ENCODE measurements at regions of chr7 and their contacts with region 1.

Region 1: GRCh38 chr7:27662490-27663205 is at the start of gene HIBADH:
- DNase-seq: peak; percentile 86 to 99 (median 96)
- ATAC-seq: peak; percentile 96 to 98 (median 96)
- H3K4me3 ChIP-seq: peak within 1 kb of the TSS; percentile 89 to 95
- H3K4me3 Mint-ChIP-seq: peak within 1 kb of the TSS; percentile 81 to 85 (median 83)
- H3K27ac ChIP-seq: peak within 1 kb of the TSS; percentile 79
- H3K27ac Mint-ChIP-seq: peak within 1 kb of the TSS; percentile 84 to 93
- H3K4me1 ChIP-seq: peaks cover 11 to 16% of the 10 kb centered on the region in 2 experiments
- H3K4me1 Mint-ChIP-seq: peaks cover 11 to 26% (median 20%) of the 10 kb centered on the region in 3 donors
- H3K27me3 ChIP-seq: no peaks in the 10 kb centered on the region
- H3K27me3 Mint-ChIP-seq: no peaks in the 10 kb centered on the region
- total RNA-seq, gene HIBADH: 9.8 to 12.5 (median 12.0) TPM

Region 2: GRCh38 chr7:27651702-27652101 is 10.9 kb before region 1 on chr7:
- CTCF ChIA-PET with region 1: interaction called in 1 of 2 experiments, 3 read pairs
- POLR2A ChIA-PET with region 1: interaction called in 1 of 2 experiments, 11 read pairs
- DNase-seq: no peak
- ATAC-seq: no peak
- H3K4me3 ChIP-seq: no peak overlapping the region
- H3K4me3 Mint-ChIP-seq: no peak overlapping the region
- H3K27ac ChIP-seq: no peak overlapping the region
- H3K27ac Mint-ChIP-seq: no peak overlapping the region
- H3K4me1 ChIP-seq: no peaks in the 10 kb centered on the region
- H3K4me1 Mint-ChIP-seq: peaks cover 3 to 8% (median 6%) of the 10 kb centered on the region in 3 donors
- H3K27me3 ChIP-seq: no peaks in the 10 kb centered on the region
- H3K27me3 Mint-ChIP-seq: no peaks in the 10 kb centered on the region

Region 3: GRCh38 chr7:27677912-27678612 is 15.4 kb after region 1 on chr7:
- CTCF ChIA-PET with region 1: no interaction called
- POLR2A ChIA-PET with region 1: interaction called in 1 of 2 experiments, 16 read pairs
- DNase-seq: no peak
- ATAC-seq: no peak
- H3K4me3 ChIP-seq: no peak overlapping the region
- H3K4me3 Mint-ChIP-seq: no peak overlapping the region
- H3K27ac ChIP-seq: no peak overlapping the region
- H3K27ac Mint-ChIP-seq: no peak overlapping the region
- H3K4me1 ChIP-seq: no peaks in the 10 kb centered on the region
- H3K4me1 Mint-ChIP-seq: no peaks in the 10 kb centered on the region
- H3K27me3 ChIP-seq: no peaks in the 10 kb centered on the region
- H3K27me3 Mint-ChIP-seq: no peaks in the 10 kb centered on the region

Region 4: GRCh38 chr7:27704422-27705199 is 42.0 kb after region 1 on chr7:
- CTCF ChIA-PET with region 1: no interaction called
- POLR2A ChIA-PET with region 1: no interaction called
- DNase-seq: no peak
- ATAC-seq: no peak
- H3K4me3 ChIP-seq: no peak overlapping the region
- H3K4me3 Mint-ChIP-seq: no peak overlapping the region
- H3K27ac ChIP-seq: no peak overlapping the region
- H3K27ac Mint-ChIP-seq: no peak overlapping the region
- H3K4me1 ChIP-seq: no peaks in the 10 kb centered on the region
- H3K4me1 Mint-ChIP-seq: no peaks in the 10 kb centered on the region
- H3K27me3 ChIP-seq: no peaks in the 10 kb centered on the region
- H3K27me3 Mint-ChIP-seq: peaks cover 19 to 20% of the 10 kb centered on the region in 2 donors

Measured in T-cell (primary cell).